WTC11 (cell line): ENCODE measurements at regions of chr11 and their contacts with region 1.

Region 1: GRCh38 chr11:65779851-65780577 is 762 bp downstream of the AP5B1 start:
- DNase-seq: peak; percentile 97
- ATAC-seq: peak; percentile 77
- H3K4me3 Mint-ChIP-seq: peak overlapping the region; percentile 86
- H3K27ac Mint-ChIP-seq: peak overlapping the region; percentile 68; the same call in 1 of the 2 replicates
- H3K4me1 Mint-ChIP-seq: peaks cover 19% of the 10 kb centered on the region
- H3K27me3 Mint-ChIP-seq: peaks cover 32% of the 10 kb centered on the region
- CTCF ChIP-seq: peak; percentile 96

Region 2: DNA sequence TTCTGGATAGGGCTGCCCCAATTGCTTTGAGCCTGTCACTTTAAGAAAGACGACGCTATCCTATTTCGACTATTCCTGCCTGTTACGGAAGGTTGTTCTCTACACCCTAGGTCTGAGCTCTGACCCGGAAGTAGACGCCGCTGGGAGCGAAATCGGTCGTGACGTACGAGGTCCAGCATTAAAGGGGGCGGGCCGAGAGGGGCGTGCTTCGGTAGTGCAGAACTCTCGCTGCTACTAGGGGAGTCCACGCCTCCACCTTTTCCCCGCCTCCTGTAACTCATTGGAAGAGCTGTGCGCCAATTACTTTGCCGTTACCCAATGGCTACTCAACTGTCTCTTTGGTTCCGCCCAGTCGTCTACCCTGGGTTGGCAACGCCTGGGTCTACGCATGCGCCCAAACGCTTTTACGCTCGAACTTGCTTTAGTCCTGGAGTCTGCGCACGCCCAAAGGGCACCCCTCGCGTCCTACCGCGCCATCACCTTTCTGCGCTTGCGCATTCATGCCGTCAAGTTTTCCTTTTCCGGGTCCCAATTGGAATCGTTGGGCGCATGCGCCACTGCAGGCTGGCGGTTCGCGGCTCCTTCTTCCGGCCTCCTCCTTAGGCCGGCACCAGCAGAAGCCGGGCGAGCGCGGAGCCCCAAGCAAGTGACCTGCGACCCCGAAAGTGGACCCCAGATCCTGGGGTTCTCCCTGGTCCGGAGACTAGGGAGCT is 164.6 kb before region 1 on chr11 and contains the start of gene PCNX3:
- CTCF ChIA-PET with region 1: interaction called, 10 read pairs
- POLR2A ChIA-PET with region 1: no interaction called
- DNase-seq: peak; percentile 100
- ATAC-seq: peak; percentile 91
- H3K4me3 Mint-ChIP-seq: peak within 1 kb of the TSS; percentile 94
- H3K27ac Mint-ChIP-seq: peak within 1 kb of the TSS; percentile 98
- H3K4me1 Mint-ChIP-seq: peaks cover 21% of the 10 kb centered on the region
- H3K27me3 Mint-ChIP-seq: no peaks in the 10 kb centered on the region; the same call in 1 of the 2 replicates
- CTCF ChIP-seq: no peak
- total RNA-seq, gene PCNX3: 44.6 to 51.6 TPM (median 45.8 TPM) in 3 replicates

Region 3: DNA sequence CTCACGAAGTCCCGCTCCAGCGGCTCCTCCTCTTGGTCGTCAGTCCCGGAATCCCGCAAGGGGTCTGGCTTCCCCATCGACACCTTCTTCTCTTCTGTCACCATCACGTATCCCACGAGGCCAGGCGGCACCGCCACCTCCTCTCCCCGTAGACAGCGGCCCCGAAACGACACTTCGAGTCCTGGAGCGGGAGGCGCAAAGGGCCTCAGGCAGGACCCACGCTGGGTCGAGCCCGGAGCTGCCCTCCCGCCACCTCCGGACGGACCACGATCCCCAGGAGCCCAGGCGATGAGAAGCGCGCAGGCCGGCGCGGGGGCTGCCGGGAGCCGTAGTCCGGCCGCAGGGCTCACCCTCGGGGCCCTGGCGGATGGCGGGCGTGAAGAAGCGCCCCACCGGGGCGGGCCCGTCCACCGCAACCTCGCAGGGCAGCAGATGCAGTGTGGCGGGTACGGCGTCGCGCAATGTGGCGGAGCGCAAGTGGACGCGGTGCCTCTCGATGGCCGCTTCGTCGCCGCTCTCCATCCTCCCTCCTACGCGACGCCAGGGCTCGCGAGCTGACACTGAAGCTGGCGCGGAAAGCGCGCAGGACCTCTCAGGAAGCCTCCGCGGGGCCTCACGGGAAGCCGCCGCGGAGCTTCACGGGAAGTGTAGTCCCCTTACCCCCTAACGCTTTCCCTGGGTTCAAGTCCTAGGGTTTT is 59.6 kb before region 1 on chr11 and contains the start of gene RNASEH2C:
- CTCF ChIA-PET with region 1: interaction called, 49 read pairs
- POLR2A ChIA-PET with region 1: no interaction called
- DNase-seq: peak; percentile 82
- ATAC-seq: peak; percentile 87
- H3K4me3 Mint-ChIP-seq: peak within 1 kb of the TSS; percentile 98
- H3K27ac Mint-ChIP-seq: peak within 1 kb of the TSS; percentile 63; the same call in 1 of the 2 replicates
- H3K4me1 Mint-ChIP-seq: peaks cover 9% of the 10 kb centered on the region
- H3K27me3 Mint-ChIP-seq: peaks cover 4% of the 10 kb centered on the region; the same call in 1 of the 2 replicates
- CTCF ChIP-seq: no peak
- total RNA-seq, gene RNASEH2C: 42.1 to 53.0 TPM (median 52.2 TPM) in 3 replicates

Region 4: DNA sequence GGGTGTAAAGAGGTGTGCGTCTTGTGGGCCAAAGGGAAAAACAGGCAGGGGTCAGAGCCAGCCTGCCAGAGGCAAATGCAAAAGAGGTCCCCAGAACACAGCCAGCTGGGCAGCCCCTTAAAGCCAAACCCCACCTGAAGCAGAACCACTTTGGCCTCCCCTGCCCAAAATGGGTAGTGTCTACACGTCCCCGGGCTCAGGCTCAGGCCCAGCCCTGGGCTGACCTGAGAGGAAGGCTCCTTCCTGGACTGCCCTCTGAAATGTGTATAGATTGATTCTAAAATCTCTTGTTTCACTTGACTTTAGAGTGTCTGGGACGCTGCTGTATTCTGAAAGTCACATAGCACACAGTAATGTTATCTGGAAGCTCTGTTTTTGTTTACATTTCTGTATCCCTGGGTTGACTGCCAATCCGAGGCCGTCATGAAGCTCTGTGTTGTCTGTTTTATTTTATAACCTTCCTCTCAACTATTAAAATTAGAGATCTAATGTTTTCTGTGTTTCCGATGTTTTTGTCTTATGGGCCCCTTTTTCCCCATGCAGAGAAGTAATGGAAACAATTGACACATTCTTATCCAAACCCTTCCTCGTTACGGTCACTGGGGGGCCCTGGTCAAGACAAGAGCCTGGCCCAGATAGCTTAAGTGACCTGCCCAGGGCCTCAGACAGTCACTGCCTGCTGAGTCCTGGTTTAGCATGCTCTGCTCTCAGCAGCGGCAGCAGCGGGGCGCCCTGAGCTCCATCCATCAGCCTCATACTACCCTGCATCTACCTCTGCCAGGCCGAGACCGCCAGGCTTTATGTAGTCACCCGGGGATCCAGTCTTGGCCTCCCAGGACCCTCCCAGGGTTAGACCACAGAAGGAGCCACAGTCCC is 16.9 kb after region 1 on chr11:
- CTCF ChIA-PET with region 1: interaction called, 151 read pairs
- POLR2A ChIA-PET with region 1: no interaction called
- DNase-seq: no peak
- ATAC-seq: peak; percentile 40
- H3K4me3 Mint-ChIP-seq: no peak overlapping the region
- H3K27ac Mint-ChIP-seq: peak overlapping the region; percentile 32
- H3K4me1 Mint-ChIP-seq: peaks cover 21% of the 10 kb centered on the region
- H3K27me3 Mint-ChIP-seq: no peaks in the 10 kb centered on the region
- CTCF ChIP-seq: no peak

Region 5: GRCh38 chr11:65833297-65834030 is 53.5 kb after region 1 on chr11 and contains the start of gene SNX32:
- CTCF ChIA-PET with region 1: interaction called, 36 read pairs
- POLR2A ChIA-PET with region 1: no interaction called
- DNase-seq: peak; percentile 97
- ATAC-seq: peak; percentile 97
- H3K4me3 Mint-ChIP-seq: no peak within 1 kb of the TSS
- H3K27ac Mint-ChIP-seq: no peak within 1 kb of the TSS
- H3K4me1 Mint-ChIP-seq: peaks cover 10% of the 10 kb centered on the region
- H3K27me3 Mint-ChIP-seq: peaks cover 19% of the 10 kb centered on the region
- CTCF ChIP-seq: no peak
- total RNA-seq, gene SNX32: 2.2 to 3.4 TPM (median 2.9 TPM) in 3 replicates

Region 6: DNA sequence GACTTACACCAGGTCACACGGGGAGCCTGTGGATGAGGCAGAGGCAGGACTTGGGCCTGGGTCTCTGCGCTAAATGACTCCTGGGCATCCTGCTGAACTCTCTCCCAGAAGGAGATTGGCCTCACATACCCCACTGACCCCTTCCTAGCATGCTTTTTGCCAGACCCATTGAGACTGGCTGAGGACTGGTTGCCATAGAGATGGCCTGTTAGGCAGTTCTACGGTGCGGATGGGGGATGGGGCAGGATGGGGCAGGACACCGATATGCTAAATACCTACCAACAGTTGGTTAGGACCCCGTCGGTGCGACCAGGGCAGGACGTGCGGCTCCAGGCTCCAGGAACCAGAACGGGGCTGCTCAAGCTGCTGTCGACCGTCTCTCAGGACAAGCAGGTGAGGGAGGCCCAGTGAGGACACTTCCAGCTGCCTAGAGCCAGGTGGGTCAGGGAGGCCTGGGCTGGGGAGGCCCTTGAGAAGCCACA is 165.5 kb after region 1 on chr11 and contains the start of gene TSGA10IP:
- CTCF ChIA-PET with region 1: interaction called, 11 read pairs
- POLR2A ChIA-PET with region 1: no interaction called
- DNase-seq: peak; percentile 84
- ATAC-seq: peak; percentile 92
- H3K4me3 Mint-ChIP-seq: peak within 1 kb of the TSS; percentile 59
- H3K27ac Mint-ChIP-seq: peak within 1 kb of the TSS; percentile 89
- H3K4me1 Mint-ChIP-seq: peaks cover 40% of the 10 kb centered on the region
- H3K27me3 Mint-ChIP-seq: peaks cover 6% of the 10 kb centered on the region; the same call in 1 of the 2 replicates
- CTCF ChIP-seq: no peak
- total RNA-seq, gene TSGA10IP: 3.4 to 4.5 TPM (median 4.1 TPM) in 3 replicates